Spleen (tissue), 13 donors: ENCODE measurements at regions of chr12 and their contacts with region 1.

Region 1: DNA sequence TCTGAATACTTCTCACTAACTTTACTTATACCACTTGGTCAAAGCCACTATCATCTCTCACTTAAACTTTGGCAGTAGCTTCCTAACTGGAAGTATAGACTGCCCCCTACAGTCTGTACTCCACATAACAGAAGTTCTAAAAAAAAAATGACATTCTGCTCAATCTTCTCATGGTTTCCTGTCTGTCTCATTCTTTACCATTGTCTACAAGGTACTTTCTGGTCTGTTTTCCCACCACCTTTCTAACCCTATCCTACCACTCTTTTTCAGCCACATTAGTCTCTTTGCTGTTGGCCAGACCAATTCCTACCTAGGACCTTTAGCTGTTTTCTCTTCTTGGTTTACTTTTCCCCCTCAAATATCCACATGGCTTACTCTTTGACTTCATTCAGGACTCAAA is 14.7 kb downstream of the CPSF6 start:
- DNase-seq: no peak
- H3K4me3 ChIP-seq: no peak overlapping the region
- H3K27ac ChIP-seq: no peak overlapping the region
- H3K4me1 ChIP-seq: peaks cover 0 to 81% (median 31%) of the 10 kb centered on the region in 6 donors
- H3K27me3 ChIP-seq: no peaks in the 10 kb centered on the region
- CTCF ChIP-seq: peak; percentile 44 to 74 (median 63)
- POLR2A ChIP-seq: no peak

Region 2: GRCh38 chr12:69157023-69157655 is 96.9 kb before region 1 on chr12:
- intact Hi-C with region 1: loop called (anchors 10 kb)
- DNase-seq: peak; percentile 97
- H3K4me3 ChIP-seq: peak overlapping the region in 1 of 8 donors; percentile 21
- H3K27ac ChIP-seq: no peak overlapping the region
- H3K4me1 ChIP-seq: peaks cover 0 to 22% (median 17%) of the 10 kb centered on the region in 6 donors
- H3K27me3 ChIP-seq: no peaks in the 10 kb centered on the region
- CTCF ChIP-seq: peak; percentile 61 to 98 (median 95)
- POLR2A ChIP-seq: no peak